ENCODE measurements at regions of chr15 and their contacts with region 1.

Region 1: GRCh38 chr15:90677807-90678790 is 39.0 kb upstream of the BLM start:
- DNase-seq: peak; percentile 37
- H3K4me3 Mint-ChIP-seq: peak overlapping the region; percentile 68
- H3K27ac Mint-ChIP-seq: peak overlapping the region; percentile 96
- H3K4me1 Mint-ChIP-seq: peaks cover 48% of the 10 kb centered on the region
- H3K27me3 Mint-ChIP-seq: peaks cover under 1% of the 10 kb centered on the region

Region 2: GRCh38 chr15:90660195-90660998 is 17.7 kb before region 1 on chr15:
- intact Hi-C with region 1: loop called (anchors 1 kb)
- DNase-seq: peak; percentile 71
- H3K4me3 Mint-ChIP-seq: peak overlapping the region; percentile 77
- H3K27ac Mint-ChIP-seq: peak overlapping the region; percentile 96
- H3K4me1 Mint-ChIP-seq: peaks cover 81% of the 10 kb centered on the region
- H3K27me3 Mint-ChIP-seq: peaks cover 1% of the 10 kb centered on the region

Region 3: DNA sequence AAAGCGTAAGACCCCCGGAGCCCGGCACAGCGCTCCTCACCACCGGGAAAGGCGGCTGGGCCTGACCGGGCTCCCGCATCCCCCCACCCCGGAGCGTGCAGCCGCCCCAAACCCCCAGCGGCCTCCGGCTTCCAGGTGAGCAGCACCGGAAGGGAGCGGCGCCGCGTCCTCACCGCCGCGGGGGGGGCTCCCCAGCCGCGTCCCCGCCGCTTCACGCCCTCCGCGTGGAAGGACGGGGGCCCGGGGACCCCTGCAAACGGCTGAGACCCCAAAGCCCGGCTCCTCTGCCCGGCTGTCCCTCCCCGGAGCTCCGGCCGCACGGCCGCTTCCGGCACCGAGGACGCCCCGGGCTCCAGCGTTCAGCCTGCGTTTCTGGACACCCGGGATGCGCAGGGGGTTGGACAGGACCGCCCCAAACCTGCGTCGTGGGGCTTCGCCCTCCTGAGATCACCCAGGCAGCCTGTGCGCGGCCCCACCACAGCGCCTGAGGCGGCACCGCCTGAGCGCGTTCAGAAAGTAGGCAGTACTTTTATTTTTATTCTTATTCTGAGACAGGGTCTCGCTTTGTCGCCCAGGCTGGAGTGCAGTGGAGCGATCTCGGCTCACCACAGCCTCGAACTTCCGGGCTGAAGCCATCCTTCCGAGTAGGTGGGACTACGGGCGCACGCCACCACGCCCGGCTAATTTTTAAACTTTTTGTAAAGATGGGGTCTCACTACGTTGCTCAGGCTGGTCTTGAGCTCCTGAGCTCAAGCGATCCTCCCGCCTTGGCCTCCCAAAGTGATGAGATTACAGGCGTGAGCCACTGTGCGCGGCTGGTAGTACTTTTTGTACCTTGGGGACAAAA is 12.6 kb before region 1 on chr15:
- intact Hi-C with region 1: loop called (anchors 1 kb)
- DNase-seq: peak; percentile 51
- H3K4me3 Mint-ChIP-seq: peak overlapping the region; percentile 85
- H3K27ac Mint-ChIP-seq: peak overlapping the region; percentile 90
- H3K4me1 Mint-ChIP-seq: peaks cover 56% of the 10 kb centered on the region
- H3K27me3 Mint-ChIP-seq: peaks cover 4% of the 10 kb centered on the region

Region 4: GRCh38 chr15:90691982-90692773 is 14.1 kb after region 1 on chr15:
- intact Hi-C with region 1: loop called (anchors 2 kb)
- DNase-seq: no peak
- H3K4me3 Mint-ChIP-seq: no peak overlapping the region
- H3K27ac Mint-ChIP-seq: no peak overlapping the region
- H3K4me1 Mint-ChIP-seq: peaks cover 52% of the 10 kb centered on the region
- H3K27me3 Mint-ChIP-seq: no peaks in the 10 kb centered on the region

Region 5: GRCh38 chr15:90742087-90742486 is 64.0 kb after region 1 on chr15:
- intact Hi-C with region 1: no loop called
- DNase-seq: no peak
- H3K4me3 Mint-ChIP-seq: no peak overlapping the region
- H3K27ac Mint-ChIP-seq: no peak overlapping the region
- H3K4me1 Mint-ChIP-seq: peaks cover 67% of the 10 kb centered on the region
- H3K27me3 Mint-ChIP-seq: no peaks in the 10 kb centered on the region